Right ventricle myocardium superior (tissue), 1 donor: ENCODE measurements at regions of chr6 and their contacts with region 1.

Region 1: DNA sequence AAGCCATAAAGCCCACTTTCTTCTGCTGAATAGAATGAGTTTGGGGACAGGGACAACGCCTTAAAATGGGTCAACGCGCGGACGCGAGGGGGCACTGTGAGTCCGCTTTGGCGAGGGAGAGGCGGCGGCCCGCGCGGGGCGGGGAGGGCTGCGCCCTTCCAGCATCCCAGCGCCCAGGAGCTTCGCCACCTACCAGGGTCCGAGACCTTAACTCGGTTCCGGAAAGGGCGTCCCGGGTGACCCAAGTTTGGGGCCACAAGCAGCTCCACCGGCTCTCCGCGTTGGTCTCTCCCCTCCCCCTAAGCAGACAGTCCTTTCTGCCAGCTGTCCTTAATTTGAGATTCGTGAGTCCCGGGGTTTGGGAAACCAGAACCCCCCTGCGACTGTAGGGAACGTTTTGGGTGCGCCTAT is 1.8 kb upstream of the SAMD5 start:
- DNase-seq: peak; percentile 85
- ATAC-seq: peak; percentile 83

Region 2: GRCh38 chr6:147651249-147652063 is 144.7 kb after region 1 on chr6:
- intact Hi-C with region 1: loop called (anchors 2 kb)
- DNase-seq: peak; percentile 46
- ATAC-seq: peak; percentile 94

Region 3: DNA sequence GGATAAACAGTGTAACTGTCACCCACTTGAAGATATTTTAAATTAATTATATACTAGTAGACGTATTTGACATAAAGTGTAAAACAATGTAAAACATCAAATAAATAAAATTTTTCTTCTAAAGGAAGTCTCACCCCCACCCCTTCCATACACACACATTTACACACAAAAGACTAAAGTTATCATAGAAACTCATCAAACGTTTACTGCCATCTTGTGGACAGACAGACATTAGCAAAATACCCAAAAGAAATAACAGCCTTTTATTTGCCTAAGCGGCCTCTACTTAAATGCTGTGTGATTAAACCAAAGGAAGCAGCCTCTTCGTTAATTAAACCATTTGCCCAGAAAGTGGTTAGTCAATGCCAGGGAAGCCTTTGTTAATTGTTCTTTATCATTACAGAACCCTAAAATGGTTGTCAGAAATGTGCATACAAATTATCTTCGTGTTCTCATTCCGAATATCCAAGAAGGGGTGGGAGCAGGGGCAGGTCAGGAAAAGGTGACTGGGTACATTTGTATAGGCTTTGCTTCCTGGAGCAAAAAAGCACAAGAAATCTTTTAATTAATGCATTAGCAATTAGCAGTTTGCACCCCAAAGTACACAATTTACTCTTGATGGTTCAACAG is 659.7 kb after region 1 on chr6:
- intact Hi-C with region 1: loop called (anchors 2 kb)
- DNase-seq: no peak
- ATAC-seq: no peak